ENCODE measurements at regions of chr17 and their contacts with region 1.

Region 1: DNA sequence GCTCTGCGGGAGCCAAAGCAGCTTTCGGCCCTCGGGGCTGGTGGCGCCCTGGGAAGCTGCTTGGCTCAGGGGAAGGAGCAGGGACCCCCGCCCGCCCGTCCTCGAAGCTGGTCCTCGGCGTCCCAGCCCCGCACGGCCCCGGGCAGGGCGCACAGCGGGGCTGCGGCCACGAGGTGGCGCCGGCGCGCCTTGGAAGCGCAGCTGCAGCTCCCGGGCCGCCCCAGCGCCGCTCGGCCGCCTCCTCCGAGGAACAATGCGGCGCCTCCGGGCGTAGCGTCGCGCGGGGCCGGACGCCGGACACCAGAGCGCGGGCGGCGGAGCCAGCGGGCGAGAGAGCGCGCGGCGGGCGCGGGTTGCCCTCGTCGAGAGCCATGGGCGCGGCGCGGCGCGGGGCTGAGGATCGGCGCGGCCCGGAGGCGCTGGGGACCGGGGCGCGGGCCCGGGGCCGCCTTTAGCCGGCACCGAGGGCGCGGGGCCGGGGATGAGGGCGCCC is at the start of gene MGAT5B:
- DNase-seq: peak; percentile 91
- H3K4me3 Mint-ChIP-seq: peak within 1 kb of the TSS; percentile 53
- H3K27ac Mint-ChIP-seq: no peak within 1 kb of the TSS
- H3K4me1 Mint-ChIP-seq: peaks cover 30% of the 10 kb centered on the region
- H3K27me3 Mint-ChIP-seq: peaks cover 46% of the 10 kb centered on the region
- CTCF ChIP-seq: peak; percentile 91
- total RNA-seq, gene MGAT5B: 1.0 and 1.8 TPM in 2 replicates

Region 2: DNA sequence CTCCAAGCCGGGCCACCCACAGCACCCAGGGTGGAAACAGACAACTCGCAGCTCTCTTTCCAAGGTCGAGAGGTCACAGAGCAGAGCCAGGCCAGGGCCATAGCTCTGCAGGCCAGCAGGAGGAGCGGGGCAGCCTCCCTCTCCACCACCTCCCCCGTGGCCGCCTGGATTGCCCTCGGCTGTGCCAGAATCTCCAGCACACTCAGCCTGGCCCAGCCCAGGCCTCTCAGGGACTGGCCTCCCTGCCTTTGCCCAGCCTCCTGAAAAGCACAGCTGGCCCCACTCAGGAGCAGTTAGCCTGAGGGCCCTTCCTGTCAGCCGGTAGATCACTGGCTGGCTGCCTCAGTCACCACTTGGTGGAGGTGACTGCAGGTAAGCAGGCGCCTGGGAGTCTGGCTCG is 186.7 kb after region 1 on chr17:
- CTCF ChIA-PET with region 1: interaction called, 42 read pairs
- intact Hi-C with region 1: no loop called
- DNase-seq: no peak
- H3K4me3 Mint-ChIP-seq: no peak overlapping the region
- H3K27ac Mint-ChIP-seq: no peak overlapping the region
- H3K4me1 Mint-ChIP-seq: no peaks in the 10 kb centered on the region
- H3K27me3 Mint-ChIP-seq: peaks cover 68% of the 10 kb centered on the region
- CTCF ChIP-seq: no peak

Region 3: GRCh38 chr17:77068915-77069314 is 200.7 kb after region 1 on chr17:
- CTCF ChIA-PET with region 1: interaction called, 11 read pairs
- intact Hi-C with region 1: loop called (anchors 5 kb)
- DNase-seq: peak; percentile 35
- H3K4me3 Mint-ChIP-seq: no peak overlapping the region
- H3K27ac Mint-ChIP-seq: no peak overlapping the region
- H3K4me1 Mint-ChIP-seq: no peaks in the 10 kb centered on the region
- H3K27me3 Mint-ChIP-seq: peaks cover 72% of the 10 kb centered on the region
- CTCF ChIP-seq: no peak